PC-9 (cell line): ENCODE measurements at regions of chr4 and their contacts with region 1.

Region 1: DNA sequence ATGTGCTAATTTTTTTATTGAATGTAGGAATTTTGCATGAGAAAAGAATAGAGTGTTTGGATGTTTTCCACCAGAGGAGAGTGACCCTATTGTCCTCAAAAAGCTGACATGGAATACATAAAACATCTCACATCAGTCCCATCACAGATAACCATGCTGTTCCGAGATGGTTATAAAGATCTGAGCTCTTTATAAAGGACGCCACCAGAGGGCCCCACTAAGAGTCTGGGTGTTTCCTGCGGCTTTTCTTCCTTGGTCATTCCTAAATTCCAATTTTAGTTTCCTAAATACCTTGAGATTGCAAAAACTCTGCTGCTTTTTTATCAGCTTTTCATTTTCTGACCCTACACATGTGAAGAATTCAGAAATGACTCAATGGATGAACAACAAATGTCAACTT is 504.5 kb upstream of the FRG1 start:
- DNase-seq: no peak
- H3K4me3 ChIP-seq: no peak overlapping the region
- H3K27ac ChIP-seq: no peak overlapping the region
- H3K4me1 ChIP-seq: no peaks in the 10 kb centered on the region
- H3K27me3 ChIP-seq: no peaks in the 10 kb centered on the region
- CTCF ChIP-seq: peak; percentile 50

Region 2: GRCh38 chr4:189792924-189793618 is 356.9 kb after region 1 on chr4:
- CTCF ChIA-PET with region 1: no interaction called
- POLR2A ChIA-PET with region 1: no interaction called
- intact Hi-C with region 1: loop called (anchors 10 kb)
- DNase-seq: peak; percentile 45 to 53
- H3K4me3 ChIP-seq: no peak overlapping the region
- H3K27ac ChIP-seq: no peak overlapping the region
- H3K4me1 ChIP-seq: no peaks in the 10 kb centered on the region
- H3K27me3 ChIP-seq: peaks cover 18% of the 10 kb centered on the region
- CTCF ChIP-seq: peak; percentile 80